MCF 10A (cell line): ENCODE measurements at regions of chr4 and their contacts with region 1.

Region 1: DNA sequence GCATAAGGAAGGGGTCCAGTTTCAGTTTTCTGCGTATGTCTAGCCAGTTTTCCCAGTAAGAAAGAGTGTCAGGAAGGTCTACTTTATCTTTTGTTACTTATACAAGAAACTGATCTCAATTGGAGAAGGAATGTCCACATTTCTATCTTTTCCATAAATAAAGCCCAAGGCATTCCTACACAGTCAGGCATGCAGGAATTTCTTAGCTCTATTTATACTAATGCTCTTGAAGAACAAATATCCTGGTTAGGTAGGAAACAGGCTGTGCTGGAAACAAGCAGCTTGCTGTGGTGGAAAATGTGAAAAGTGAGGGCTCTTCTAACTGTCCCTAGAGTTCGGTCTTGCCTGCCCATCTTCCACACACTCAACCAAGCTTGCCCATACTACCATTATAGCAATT is 37.9 kb upstream of the PITX2 start:
- DNase-seq: no peak
- H3K4me3 Mint-ChIP-seq: no peak overlapping the region
- H3K27ac Mint-ChIP-seq: no peak overlapping the region
- H3K4me1 Mint-ChIP-seq: peaks cover 13% of the 10 kb centered on the region
- H3K27me3 Mint-ChIP-seq: peaks cover 67% of the 10 kb centered on the region
- CTCF ChIP-seq: no peak

Region 2: GRCh38 chr4:110681381-110681780 is 20.6 kb after region 1 on chr4:
- CTCF ChIA-PET with region 1: no interaction called
- POLR2A ChIA-PET with region 1: interaction called, 4 read pairs
- intact Hi-C with region 1: loop called (anchors 2 kb)
- DNase-seq: peak; percentile 28
- H3K4me3 Mint-ChIP-seq: no peak overlapping the region
- H3K27ac Mint-ChIP-seq: no peak overlapping the region
- H3K4me1 Mint-ChIP-seq: peaks cover 20% of the 10 kb centered on the region
- H3K27me3 Mint-ChIP-seq: no peaks in the 10 kb centered on the region
- CTCF ChIP-seq: no peak

Region 3: GRCh38 chr4:111037591-111038360 is 377.0 kb after region 1 on chr4:
- CTCF ChIA-PET with region 1: no interaction called
- POLR2A ChIA-PET with region 1: no interaction called
- intact Hi-C with region 1: no loop called
- DNase-seq: no peak
- H3K4me3 Mint-ChIP-seq: no peak overlapping the region
- H3K27ac Mint-ChIP-seq: no peak overlapping the region
- H3K4me1 Mint-ChIP-seq: no peaks in the 10 kb centered on the region
- H3K27me3 Mint-ChIP-seq: no peaks in the 10 kb centered on the region
- CTCF ChIP-seq: no peak